Activated CD4-positive, alpha-beta T cell treated with anti-CD3 and anti-CD28 coated beads, Interleukin-2, amount 10 ng/mL, durations not matched to agents 24 days and 14 days (primary cell): ENCODE measurements at regions of chr1 and their contacts with region 1.

Region 1: GRCh38 chr1:160768295-160768657 is 27.7 kb upstream of the LY9 start:
- DNase-seq: peak; percentile 95
- H3K4me3 Mint-ChIP-seq: peak overlapping the region; percentile 88
- H3K27ac Mint-ChIP-seq: peak overlapping the region; percentile 98
- H3K4me1 Mint-ChIP-seq: peaks cover 33% of the 10 kb centered on the region
- H3K27me3 Mint-ChIP-seq: peaks cover 2% of the 10 kb centered on the region

Region 2: GRCh38 chr1:160629286-160630210 is 138.7 kb before region 1 on chr1:
- intact Hi-C with region 1: loop called (anchors 5 kb)
- DNase-seq: peak; percentile 94
- H3K4me3 Mint-ChIP-seq: peak overlapping the region; percentile 74
- H3K27ac Mint-ChIP-seq: peak overlapping the region; percentile 99
- H3K4me1 Mint-ChIP-seq: peaks cover 91% of the 10 kb centered on the region
- H3K27me3 Mint-ChIP-seq: no peaks in the 10 kb centered on the region

Region 3: GRCh38 chr1:160744199-160744851 is 24.0 kb before region 1 on chr1:
- intact Hi-C with region 1: loop called (anchors 2 kb)
- DNase-seq: peak; percentile 78
- H3K4me3 Mint-ChIP-seq: peak overlapping the region; percentile 59
- H3K27ac Mint-ChIP-seq: peak overlapping the region; percentile 82
- H3K4me1 Mint-ChIP-seq: peaks cover 77% of the 10 kb centered on the region
- H3K27me3 Mint-ChIP-seq: no peaks in the 10 kb centered on the region

Region 4: DNA sequence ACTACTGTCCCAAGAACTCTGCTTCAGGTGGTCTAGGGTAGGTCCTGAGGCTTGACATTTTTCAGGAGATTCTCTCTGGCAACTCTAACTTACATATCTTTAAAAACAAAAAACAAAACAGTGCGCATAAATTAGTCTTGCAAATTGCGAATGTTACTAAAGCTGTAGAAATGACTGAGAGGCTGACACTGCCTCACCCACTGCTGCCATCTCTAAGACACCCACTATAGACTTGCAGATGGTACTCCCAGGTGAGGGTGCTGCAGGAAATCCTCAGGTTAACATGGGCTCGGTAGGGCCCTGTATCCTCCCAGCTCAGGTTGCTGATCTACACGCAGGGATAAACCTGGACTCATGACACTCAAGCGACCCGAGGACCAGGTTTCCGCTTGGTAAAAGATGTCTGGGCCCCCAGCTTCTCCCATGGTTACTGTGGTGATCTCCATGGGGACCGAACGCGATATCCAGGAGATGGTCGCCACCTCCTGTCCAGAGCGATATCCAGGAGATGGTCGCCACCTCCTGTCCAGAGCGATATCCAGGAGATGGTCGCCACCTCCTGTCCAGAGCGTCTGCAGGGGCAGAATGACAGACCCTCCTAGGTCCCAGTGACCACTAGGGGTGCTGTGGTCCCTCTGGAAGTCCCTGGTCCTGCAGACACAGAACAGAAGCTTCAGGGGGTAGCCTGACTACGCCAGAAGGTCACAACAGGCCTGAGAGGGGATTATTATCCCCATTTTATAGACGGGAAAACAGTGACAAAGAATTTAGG is 11.5 kb after region 1 on chr1:
- intact Hi-C with region 1: no loop called
- DNase-seq: peak; percentile 72
- H3K4me3 Mint-ChIP-seq: no peak overlapping the region
- H3K27ac Mint-ChIP-seq: no peak overlapping the region
- H3K4me1 Mint-ChIP-seq: peaks cover 28% of the 10 kb centered on the region
- H3K27me3 Mint-ChIP-seq: peaks cover 3% of the 10 kb centered on the region

Region 5: DNA sequence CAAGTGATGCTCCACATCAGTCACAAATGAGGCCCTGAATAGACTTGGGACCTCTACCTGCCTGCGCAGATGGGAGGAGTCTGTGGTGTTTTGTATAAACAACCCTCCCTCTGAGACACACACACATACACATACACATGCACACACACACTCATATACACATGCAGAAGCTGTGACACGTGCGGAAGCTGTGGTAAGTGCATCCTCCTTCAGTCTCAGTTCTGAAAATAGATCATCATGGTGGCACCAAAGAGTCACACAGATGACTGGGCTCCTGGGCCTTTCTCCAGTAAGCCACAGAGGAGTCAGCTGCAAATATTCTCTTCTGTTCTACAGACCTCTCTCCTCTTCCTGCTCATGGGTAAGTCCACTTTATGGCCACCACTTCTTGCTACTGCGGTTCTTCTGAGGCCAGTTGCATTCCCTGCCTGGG is 27.7 kb after region 1 on chr1 and contains the start of gene LY9:
- intact Hi-C with region 1: loop called (anchors 2 kb)
- DNase-seq: peak; percentile 93
- H3K4me3 Mint-ChIP-seq: peak within 1 kb of the TSS; percentile 83
- H3K27ac Mint-ChIP-seq: peak within 1 kb of the TSS; percentile 83
- H3K4me1 Mint-ChIP-seq: peaks cover 54% of the 10 kb centered on the region
- H3K27me3 Mint-ChIP-seq: peaks cover 4% of the 10 kb centered on the region
- total RNA-seq, gene LY9: 0.30 and 0.85 TPM in 2 replicates

Region 6: GRCh38 chr1:160830321-160831153 is 62.3 kb after region 1 on chr1:
- intact Hi-C with region 1: no loop called
- DNase-seq: peak; percentile 93
- H3K4me3 Mint-ChIP-seq: no peak overlapping the region
- H3K27ac Mint-ChIP-seq: peak overlapping the region; percentile 22
- H3K4me1 Mint-ChIP-seq: peaks cover 13% of the 10 kb centered on the region
- H3K27me3 Mint-ChIP-seq: no peaks in the 10 kb centered on the region

Region 7: DNA sequence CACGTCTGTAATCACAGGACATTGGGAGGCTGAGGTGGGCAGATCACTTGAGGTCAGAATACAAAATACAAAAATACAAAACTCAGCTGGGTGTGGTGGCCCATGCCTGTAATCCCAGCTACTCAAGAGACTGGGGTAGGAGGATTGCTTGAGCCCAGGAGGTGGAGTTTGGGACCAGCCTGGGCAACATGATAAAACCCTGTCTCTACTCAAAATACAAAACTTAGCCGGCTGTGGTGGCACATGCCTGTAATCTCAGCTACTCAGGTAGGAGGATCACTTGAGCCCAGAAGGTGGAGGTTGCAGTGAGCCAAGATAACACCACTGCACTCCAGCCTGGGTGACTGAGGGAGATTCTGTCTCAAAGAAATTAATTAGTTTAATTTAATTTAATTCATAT is 123.2 kb after region 1 on chr1:
- intact Hi-C with region 1: no loop called
- DNase-seq: no peak
- H3K4me3 Mint-ChIP-seq: no peak overlapping the region
- H3K27ac Mint-ChIP-seq: no peak overlapping the region
- H3K4me1 Mint-ChIP-seq: no peaks in the 10 kb centered on the region
- H3K27me3 Mint-ChIP-seq: peaks cover 39% of the 10 kb centered on the region